Adrenal gland (tissue), 19 donors: ENCODE measurements at regions of chr1 and their contacts with region 1.

Region 1: DNA sequence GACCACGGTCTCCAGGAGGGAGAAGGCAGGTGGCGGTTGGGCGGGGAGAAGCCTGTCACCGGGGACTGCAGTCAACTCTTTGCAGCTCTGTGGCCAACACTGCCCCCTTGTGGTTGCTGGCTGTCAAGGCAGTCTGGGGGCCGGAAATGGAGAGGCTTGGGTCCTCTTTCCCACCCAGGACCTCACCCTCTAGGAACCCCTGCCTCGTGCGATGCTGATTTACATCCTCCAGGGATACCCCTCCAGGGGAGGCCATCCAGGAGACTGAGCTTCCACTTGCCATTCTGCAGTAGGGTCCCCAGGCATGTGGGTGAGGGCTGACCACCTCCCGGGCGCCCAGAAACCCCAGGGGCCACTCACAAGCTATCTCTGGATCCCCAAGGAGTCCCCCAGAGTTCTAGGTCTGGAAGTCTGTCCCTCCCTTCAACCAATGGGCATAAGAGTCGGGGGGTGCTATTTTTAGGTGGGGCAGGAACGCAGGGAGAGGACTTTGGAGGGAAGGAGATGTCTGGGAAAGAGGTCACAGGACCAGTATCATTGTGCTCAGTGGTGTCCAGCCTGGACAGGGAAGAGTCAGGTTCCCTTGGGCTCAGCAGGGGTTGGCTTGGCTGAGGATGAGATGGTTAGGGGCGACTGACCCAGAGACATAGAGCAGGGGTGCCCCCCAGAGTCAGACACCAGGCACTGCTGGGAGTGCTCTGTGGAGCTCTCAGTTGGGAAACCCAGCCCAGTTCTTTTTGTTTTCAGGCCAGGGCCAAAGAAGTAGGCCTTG is 7.1 kb upstream of the GPR61 start:
- DNase-seq: peak; percentile 85 to 95 (median 89)
- H3K4me3 ChIP-seq: peak overlapping the region in 1 of 4 donors; percentile 39
- H3K27ac ChIP-seq: peak overlapping the region in 4 of 5 donors; percentile 44 to 81 (median 72)
- H3K4me1 ChIP-seq: peaks cover 14 to 27% of the 10 kb centered on the region in 2 donors
- H3K27me3 ChIP-seq: no peaks in the 10 kb centered on the region
- CTCF ChIP-seq: peak; percentile 90 to 99 (median 99)
- POLR2A ChIP-seq: no peak

Region 2: GRCh38 chr1:109277434-109278204 is 254.9 kb before region 1 on chr1:
- intact Hi-C with region 1: loop called (anchors 10 kb)
- DNase-seq: peak; percentile 78 to 94 (median 84)
- H3K4me3 ChIP-seq: no peak overlapping the region
- H3K27ac ChIP-seq: no peak overlapping the region
- H3K4me1 ChIP-seq: peaks cover 0 to 14% of the 10 kb centered on the region in 2 donors
- H3K27me3 ChIP-seq: no peaks in the 10 kb centered on the region
- CTCF ChIP-seq: peak; percentile 87 to 96 (median 92)
- POLR2A ChIP-seq: no peak

Region 3: DNA sequence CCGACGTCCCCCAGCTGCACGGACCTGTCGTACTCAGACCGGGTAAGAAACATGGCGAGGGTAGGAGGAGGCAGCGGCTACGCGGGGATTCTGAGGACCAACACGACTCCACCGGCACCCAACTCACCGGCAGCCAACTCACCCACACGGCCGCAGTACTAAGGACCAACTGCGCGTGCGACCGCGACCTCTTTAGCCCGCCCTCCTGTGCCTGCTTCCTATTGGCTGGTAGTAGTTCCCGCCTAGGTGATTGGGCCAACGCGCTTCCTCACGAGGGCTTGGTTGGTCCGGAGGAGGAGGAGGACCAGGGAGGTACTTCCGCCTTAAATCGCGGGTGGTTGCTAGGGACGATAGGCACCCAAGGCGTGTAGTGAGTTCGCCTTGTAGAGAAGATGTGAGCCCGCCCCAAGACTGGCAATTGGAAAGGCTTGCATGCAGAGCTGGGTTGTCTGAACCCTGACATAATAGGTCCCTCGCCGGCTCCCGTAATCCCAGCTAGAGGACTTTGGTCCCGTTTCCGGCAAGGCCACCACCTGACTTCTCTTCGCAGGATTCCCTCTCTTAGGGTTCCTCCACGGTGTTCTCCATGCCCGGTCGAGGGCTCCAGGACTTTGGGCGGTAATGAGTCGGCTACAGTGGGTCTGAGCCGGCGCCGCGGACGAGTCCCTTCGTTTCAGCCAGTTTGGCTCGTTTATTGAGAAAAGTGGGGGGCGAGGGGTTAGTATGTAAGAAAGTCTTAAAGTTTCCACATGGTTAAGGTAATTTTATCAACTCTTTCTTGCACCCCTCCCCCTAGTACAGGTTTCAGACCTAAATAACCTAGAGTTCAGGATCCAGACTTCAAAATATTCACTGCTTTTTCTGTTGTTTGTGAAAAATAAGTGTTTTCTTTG is 106.0 kb before region 1 on chr1 and contains the start of gene PSMA5:
- intact Hi-C with region 1: loop called in 1 of 2 experiments (anchors 10 kb)
- DNase-seq: peak; percentile 95 to 99 (median 99)
- H3K4me3 ChIP-seq: peak within 1 kb of the TSS; percentile 81 to 92 (median 87)
- H3K27ac ChIP-seq: peak within 1 kb of the TSS; percentile 66 to 96 (median 77)
- H3K4me1 ChIP-seq: peaks cover 13 to 37% of the 10 kb centered on the region in 2 donors
- H3K27me3 ChIP-seq: no peaks in the 10 kb centered on the region
- CTCF ChIP-seq: no peak
- POLR2A ChIP-seq: peak; percentile 72 to 93
- total RNA-seq, gene PSMA5: 22.8 to 187 (median 67.8) TPM

Region 4: DNA sequence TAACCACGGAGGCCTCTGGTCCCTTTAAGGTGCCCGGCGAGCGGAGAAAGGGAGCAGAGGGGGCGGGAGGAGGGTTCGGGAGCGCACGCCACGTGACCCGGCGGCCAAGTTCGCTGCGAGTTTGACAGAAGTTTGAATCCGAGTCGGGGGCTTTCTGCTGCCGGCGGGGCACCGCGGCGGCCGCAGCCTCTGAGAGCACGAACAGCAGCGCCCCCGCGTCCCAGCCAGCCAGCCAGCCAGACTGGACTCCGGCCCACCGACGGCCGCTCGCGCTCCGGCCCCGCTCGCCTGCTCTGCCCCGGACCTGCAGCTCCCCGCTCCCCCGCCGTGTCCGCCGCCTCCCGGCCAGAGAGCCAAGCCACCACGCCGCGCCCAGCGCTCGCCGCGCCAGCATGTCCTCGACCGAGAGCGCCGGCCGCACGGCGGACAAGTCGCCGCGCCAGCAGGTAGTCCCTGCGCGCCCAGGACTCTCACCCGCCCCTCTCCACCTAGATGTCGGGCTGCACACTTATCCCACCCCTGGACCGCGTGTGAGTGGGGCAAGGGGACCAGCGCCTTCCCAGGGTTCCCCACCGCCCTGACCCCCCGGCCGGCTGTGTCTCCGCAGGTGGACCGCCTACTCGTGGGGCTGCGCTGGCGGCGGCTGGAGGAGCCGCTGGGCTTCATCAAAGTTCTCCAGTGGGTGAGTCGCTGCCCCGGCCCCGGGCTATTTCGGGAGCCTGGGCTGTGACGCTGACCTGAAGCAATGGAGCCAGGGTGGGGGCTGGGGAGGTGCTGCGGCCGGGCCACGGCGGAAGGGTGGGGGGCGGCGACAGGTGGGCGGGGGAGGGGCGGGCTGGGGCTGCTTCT is 65.9 kb before region 1 on chr1 and contains the start of gene SYPL2:
- intact Hi-C with region 1: no loop called
- DNase-seq: peak; percentile 77 to 86 (median 82)
- H3K4me3 ChIP-seq: peak within 1 kb of the TSS in 3 of 4 donors; percentile 22 to 89 (median 68)
- H3K27ac ChIP-seq: peak within 1 kb of the TSS; percentile 21 to 86 (median 85)
- H3K4me1 ChIP-seq: peaks cover 10 to 11% of the 10 kb centered on the region in 2 donors
- H3K27me3 ChIP-seq: no peaks in the 10 kb centered on the region
- CTCF ChIP-seq: no peak
- POLR2A ChIP-seq: peak; percentile 25 to 70
- total RNA-seq, gene SYPL2: 6.4 to 20.3 (median 13.6) TPM

Region 5: DNA sequence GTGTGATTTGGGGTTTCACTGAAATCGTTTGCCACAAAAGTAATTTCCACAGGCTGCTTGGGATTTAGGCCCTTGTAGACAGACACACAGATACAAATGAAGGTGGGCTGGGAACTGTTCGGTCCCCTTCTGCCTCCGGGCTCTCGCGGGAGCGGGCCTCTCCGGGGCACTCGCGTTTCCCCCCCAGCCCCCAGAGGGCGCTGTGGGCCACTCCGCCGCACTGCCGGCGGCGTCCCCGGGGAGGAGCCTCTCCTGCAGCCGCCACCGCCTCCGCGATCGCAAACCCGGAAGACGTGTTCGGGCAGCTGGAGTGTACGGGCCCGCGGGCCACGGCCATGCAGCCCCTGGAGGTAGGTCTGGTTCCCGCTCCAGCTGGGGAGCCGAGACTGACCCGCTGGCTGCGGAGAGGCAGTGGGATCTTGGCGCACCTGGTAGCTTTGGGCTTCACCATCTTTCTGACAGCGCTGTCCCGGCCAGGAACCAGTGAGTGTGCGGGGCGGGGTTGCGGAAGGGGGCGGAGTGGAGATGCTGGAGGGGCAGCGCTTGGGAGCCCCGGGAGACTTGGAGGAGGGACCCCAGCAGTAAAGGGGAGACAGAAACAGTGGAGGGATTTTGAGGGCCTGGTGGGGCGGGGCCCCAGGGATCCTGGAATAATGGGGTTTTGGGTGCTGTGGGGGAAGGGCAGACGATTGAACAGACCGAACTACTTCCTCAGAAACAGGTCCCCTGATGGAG is 38.6 kb before region 1 on chr1 and contains the start of gene CYB561D1:
- intact Hi-C with region 1: loop called (anchors 1 to 2 kb)
- DNase-seq: peak; percentile 83 to 90 (median 86)
- H3K4me3 ChIP-seq: peak within 1 kb of the TSS; percentile 48 to 98 (median 89)
- H3K27ac ChIP-seq: peak within 1 kb of the TSS in 3 of 5 donors; percentile 26 to 82 (median 65)
- H3K4me1 ChIP-seq: peaks cover 18 to 40% of the 10 kb centered on the region in 2 donors
- H3K27me3 ChIP-seq: no peaks in the 10 kb centered on the region
- CTCF ChIP-seq: peak; percentile 70 to 94 (median 90)
- POLR2A ChIP-seq: peak in 1 of 2 donors; percentile 54
- total RNA-seq, gene CYB561D1: 8.4 to 21.2 (median 13.8) TPM

Region 6: GRCh38 chr1:109509176-109510134 is 23.1 kb before region 1 on chr1 and contains the start of gene AMIGO1:
- intact Hi-C with region 1: loop called in 1 of 2 experiments (anchors 2 kb)
- DNase-seq: peak in 5 of 7 donors; percentile 57 to 65 (median 58)
- H3K4me3 ChIP-seq: peak within 1 kb of the TSS in 3 of 4 donors; percentile 23 to 81 (median 35)
- H3K27ac ChIP-seq: peak within 1 kb of the TSS in 3 of 5 donors; percentile 26 to 72 (median 56)
- H3K4me1 ChIP-seq: peaks cover 0 to 7% of the 10 kb centered on the region in 2 donors
- H3K27me3 ChIP-seq: no peaks in the 10 kb centered on the region
- CTCF ChIP-seq: peak in 1 of 6 experiments; percentile 9
- POLR2A ChIP-seq: peak in 1 of 2 donors; percentile 31
- total RNA-seq, gene AMIGO1: 17.2 to 27.9 (median 22.8) TPM